BJ (cell line): ENCODE measurements at regions of chr1 and their contacts with region 1.

Region 1: GRCh38 chr1:16613185-16614147 is at the start of gene NBPF1:
- DNase-seq: peak; percentile 73
- H3K4me3 ChIP-seq: peak within 1 kb of the TSS; percentile 75
- H3K27me3 ChIP-seq: no peaks in the 10 kb centered on the region
- CTCF ChIP-seq: peak; percentile 11; the same call in 1 of the 2 replicates
- polyA plus RNA-seq, gene NBPF1: 28.3 and 36.9 TPM in 2 replicates

Region 2: GRCh38 chr1:14964711-14965055 is 1648.8 kb before region 1 on chr1:
- CTCF ChIA-PET with region 1: no interaction called
- POLR2A ChIA-PET with region 1: interaction called, 14 read pairs
- DNase-seq: no peak
- H3K4me3 ChIP-seq: no peak overlapping the region
- H3K27me3 ChIP-seq: no peaks in the 10 kb centered on the region
- CTCF ChIP-seq: no peak